ENCODE measurements at regions of chr5 and their contacts with region 1.

Region 1: DNA sequence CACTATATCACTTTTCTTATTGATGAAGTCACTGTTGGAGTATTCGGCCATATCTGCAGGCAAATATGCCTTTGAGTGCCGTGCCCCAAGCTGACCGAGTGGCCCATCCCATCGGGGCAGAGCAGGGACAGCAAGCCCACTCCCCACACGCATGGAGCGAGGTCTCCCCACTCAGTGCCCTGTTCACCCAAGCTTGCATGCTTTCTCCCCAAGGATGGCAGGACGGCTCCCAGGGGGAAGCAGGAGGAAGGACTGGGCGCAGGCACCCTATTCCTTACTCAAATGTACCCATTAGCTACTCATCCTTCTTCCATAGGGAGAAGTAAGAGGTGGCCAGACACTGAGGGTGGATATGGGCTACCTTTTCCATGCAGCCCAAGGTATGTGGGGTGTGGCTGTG is 309.0 kb downstream of the IRX1 start:
- DNase-seq: no peak
- H3K4me3 ChIP-seq: no peak overlapping the region
- H3K27ac ChIP-seq: no peak overlapping the region
- H3K4me1 ChIP-seq: no peaks in the 10 kb centered on the region
- H3K27me3 ChIP-seq: no peaks in the 10 kb centered on the region
- CTCF ChIP-seq: no peak

Region 2: DNA sequence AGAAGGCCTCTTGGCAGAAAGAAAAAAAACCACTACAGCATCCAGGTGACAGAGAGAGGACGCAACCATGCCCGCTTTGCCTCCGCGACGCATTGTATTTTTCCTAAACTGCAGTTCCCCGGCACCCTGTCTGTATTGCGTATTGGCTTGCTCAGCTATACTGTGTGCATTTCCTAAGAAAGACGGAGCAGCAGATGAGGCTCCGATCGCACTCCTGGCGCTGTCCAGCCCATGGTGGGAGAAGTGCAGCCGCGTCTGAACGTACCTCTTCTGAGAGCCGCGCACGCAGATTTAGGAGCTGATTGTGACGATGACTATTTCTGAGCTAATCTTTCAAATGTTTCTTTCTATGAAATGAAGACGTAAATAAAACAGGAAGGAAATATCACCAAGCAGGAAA is 57.5 kb after region 1 on chr5:
- CTCF ChIA-PET with region 1: no interaction called
- dilution Hi-C with region 1: loop called (anchors 5 kb)
- in situ Hi-C with region 1: no loop called
- intact Hi-C with region 1: no loop called
- DNase-seq: no peak
- H3K4me3 ChIP-seq: no peak overlapping the region
- H3K27ac ChIP-seq: no peak overlapping the region
- H3K4me1 ChIP-seq: no peaks in the 10 kb centered on the region
- H3K27me3 ChIP-seq: no peaks in the 10 kb centered on the region
- CTCF ChIP-seq: no peak

Measured in mammary epithelial cell (primary cell).